ENCODE measurements at regions of chr16 and their contacts with region 1.

Region 1: DNA sequence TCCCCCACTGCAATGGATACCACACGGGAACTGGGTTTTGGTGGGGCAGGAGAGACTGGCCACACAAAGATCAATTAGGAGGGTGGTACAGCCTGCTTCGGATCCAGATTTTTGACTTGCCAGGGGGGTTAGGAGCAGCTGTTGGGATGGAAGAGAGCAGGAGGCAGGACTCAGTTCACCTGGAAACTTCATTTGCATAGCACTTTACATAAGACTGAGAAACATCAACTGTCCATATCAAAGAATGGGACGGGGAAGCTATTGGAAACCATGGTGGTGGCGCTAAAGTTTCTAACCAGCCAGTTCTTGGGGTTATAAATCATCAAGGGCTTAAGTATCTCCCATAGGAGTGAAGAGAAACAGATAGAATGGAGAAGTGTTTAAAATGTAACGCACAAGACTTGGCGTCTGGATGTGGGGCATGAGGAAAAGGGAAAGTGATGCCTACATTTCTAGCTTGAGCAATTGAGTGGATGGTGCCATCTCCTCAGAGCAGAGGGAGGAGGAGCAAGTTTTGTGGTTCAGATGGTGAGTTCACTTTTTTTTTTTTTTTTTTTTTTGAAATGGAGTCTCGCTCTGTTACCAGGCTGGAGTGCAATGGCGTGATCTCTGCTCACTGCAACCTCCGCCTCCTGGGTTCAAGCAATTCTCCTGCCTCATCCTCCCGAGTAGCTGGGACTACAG is 6.4 kb upstream of the SRCAP start:
- DNase-seq: no peak
- ATAC-seq: no peak
- H3K4me3 Mint-ChIP-seq: no peak overlapping the region
- H3K27ac Mint-ChIP-seq: peak overlapping the region; percentile 10
- H3K4me1 Mint-ChIP-seq: peaks cover 28% of the 10 kb centered on the region
- H3K27me3 Mint-ChIP-seq: no peaks in the 10 kb centered on the region

Region 2: DNA sequence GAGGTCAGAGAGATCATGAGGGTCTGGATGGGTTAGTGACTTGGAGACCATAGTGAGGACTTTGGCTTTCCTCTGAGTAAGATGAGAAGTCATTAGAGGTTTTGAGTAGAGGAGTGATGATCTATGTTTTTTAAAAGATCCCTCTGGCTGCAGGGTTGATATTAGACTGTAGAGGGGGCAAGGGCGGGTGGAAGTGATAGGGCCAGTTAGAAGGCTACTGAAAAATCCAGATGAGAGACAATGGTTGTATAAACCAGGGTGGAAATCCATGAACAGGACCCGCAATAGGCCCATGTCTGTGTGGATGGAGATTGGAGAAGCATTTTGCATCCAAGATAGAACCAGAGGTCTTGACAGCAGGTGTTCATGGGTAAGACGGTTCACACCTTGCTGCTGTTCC is 210.2 kb before region 1 on chr16:
- CTCF ChIA-PET with region 1: no interaction called
- POLR2A ChIA-PET with region 1: no interaction called
- DNase-seq: no peak
- ATAC-seq: no peak
- H3K4me3 Mint-ChIP-seq: no peak overlapping the region
- H3K27ac Mint-ChIP-seq: peak overlapping the region; percentile 40
- H3K4me1 Mint-ChIP-seq: peaks cover 63% of the 10 kb centered on the region
- H3K27me3 Mint-ChIP-seq: no peaks in the 10 kb centered on the region

Region 3: GRCh38 chr16:30628627-30629540 is 63.6 kb before region 1 on chr16:
- CTCF ChIA-PET with region 1: interaction called, 10 read pairs
- POLR2A ChIA-PET with region 1: no interaction called
- DNase-seq: peak; percentile 92
- ATAC-seq: peak; percentile 92
- H3K4me3 Mint-ChIP-seq: peak overlapping the region; percentile 45
- H3K27ac Mint-ChIP-seq: peak overlapping the region; percentile 67
- H3K4me1 Mint-ChIP-seq: peaks cover 10% of the 10 kb centered on the region
- H3K27me3 Mint-ChIP-seq: no peaks in the 10 kb centered on the region

Region 4: DNA sequence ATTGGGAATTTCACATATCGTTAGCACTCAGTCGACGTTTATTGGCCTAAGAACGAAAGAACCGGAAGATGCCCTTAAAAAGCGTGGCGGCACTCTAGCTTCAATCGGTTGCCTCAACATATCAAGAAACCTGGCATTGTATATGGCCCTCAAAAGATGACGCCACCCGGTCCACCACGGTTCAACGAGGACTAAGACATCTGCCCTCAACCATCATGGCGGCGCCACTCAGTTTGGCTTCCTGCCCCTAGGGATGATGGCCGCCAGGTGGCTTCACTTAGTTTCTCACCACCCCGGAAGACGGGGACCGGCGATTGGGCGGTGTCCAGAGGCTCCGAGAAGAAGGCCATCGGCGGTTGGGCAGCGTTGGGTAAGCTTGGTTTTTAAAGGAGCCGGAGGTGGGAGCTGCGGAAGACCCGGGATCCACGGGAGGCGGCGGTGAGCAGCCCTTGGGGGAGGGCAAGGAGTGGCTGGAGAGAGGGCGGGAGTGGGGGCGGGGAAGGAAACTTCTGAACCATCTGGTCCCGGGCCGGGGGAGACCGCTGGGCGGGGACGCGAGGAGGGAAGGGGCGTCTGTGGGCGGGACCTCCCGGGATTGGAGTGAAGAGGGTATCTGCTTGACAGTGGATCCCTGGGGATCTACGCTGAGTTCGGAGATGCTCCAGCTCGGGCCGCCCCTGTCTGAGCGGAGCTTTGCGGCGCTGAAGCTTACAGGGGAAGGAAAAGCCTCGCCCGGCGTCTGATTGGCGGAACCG is 42.0 kb before region 1 on chr16 and contains the start of gene PRR14:
- CTCF ChIA-PET with region 1: interaction called, 26 read pairs
- POLR2A ChIA-PET with region 1: interaction called, 5 read pairs
- DNase-seq: peak; percentile 100
- ATAC-seq: peak; percentile 86
- H3K4me3 Mint-ChIP-seq: peak within 1 kb of the TSS; percentile 91
- H3K27ac Mint-ChIP-seq: peak within 1 kb of the TSS; percentile 95
- H3K4me1 Mint-ChIP-seq: peaks cover 40% of the 10 kb centered on the region
- H3K27me3 Mint-ChIP-seq: peaks cover 1% of the 10 kb centered on the region
- total RNA-seq, gene PRR14: 87.6 to 91.4 TPM

Region 5: DNA sequence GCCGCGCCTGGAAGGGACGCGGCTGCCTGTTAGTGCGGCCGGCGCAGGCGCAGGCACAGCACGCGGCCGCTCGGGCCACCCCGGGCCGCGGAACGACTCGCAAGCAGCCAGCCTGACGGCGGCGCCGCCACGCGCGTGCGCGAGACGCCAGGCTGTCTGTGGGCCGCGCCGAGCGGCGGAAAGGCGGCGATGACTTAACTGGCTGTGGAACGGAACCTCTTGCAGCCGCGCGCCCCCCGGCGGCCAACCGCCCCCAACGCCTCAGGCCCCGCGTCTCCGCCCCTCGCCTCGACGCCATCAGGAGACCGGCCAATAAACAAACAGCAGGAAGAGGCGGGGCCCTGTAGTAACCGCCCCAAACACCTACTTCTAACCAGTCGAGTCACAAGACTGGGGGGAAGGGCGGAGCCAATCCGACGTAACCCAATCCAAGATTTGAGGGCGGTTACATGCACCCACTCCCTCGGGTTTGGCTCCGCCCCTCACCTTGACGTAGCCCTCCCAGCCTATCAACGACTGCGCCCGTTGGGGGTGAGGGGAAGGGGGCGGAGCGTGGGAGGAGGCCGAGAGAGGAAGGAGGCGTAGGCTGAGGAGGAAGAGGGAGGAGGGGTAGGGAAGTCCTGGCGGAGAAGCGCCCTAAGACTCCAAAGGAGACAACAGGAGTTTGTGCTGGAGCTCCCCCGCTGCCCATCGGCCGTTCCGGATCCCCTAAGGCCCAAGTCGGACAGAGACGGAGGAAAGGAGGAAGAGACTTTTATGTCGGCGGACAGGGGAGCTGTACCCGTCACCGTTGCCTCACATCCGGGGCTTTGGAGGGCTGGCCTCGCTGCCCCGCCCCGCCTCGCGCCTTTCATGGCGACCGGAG is 34.4 kb before region 1 on chr16 and contains the start of gene FBRS:
- CTCF ChIA-PET with region 1: interaction called, 129 read pairs
- POLR2A ChIA-PET with region 1: interaction called, 72 read pairs
- DNase-seq: peak; percentile 100
- ATAC-seq: peak; percentile 77
- H3K4me3 Mint-ChIP-seq: peak within 1 kb of the TSS; percentile 87
- H3K27ac Mint-ChIP-seq: peak within 1 kb of the TSS; percentile 100
- H3K4me1 Mint-ChIP-seq: peaks cover 49% of the 10 kb centered on the region
- H3K27me3 Mint-ChIP-seq: no peaks in the 10 kb centered on the region
- total RNA-seq, gene FBRS: 85.2 to 100 TPM

Region 6: GRCh38 chr16:30663820-30664396 is 28.6 kb before region 1 on chr16:
- CTCF ChIA-PET with region 1: interaction called, 129 read pairs
- POLR2A ChIA-PET with region 1: interaction called, 72 read pairs
- DNase-seq: no peak
- ATAC-seq: no peak
- H3K4me3 Mint-ChIP-seq: no peak overlapping the region
- H3K27ac Mint-ChIP-seq: peak overlapping the region; percentile 18
- H3K4me1 Mint-ChIP-seq: peaks cover 37% of the 10 kb centered on the region
- H3K27me3 Mint-ChIP-seq: no peaks in the 10 kb centered on the region

Region 7: GRCh38 chr16:30669896-30670797 is 22.4 kb before region 1 on chr16:
- CTCF ChIA-PET with region 1: interaction called, 20 read pairs
- POLR2A ChIA-PET with region 1: no interaction called
- DNase-seq: no peak
- ATAC-seq: no peak
- H3K4me3 Mint-ChIP-seq: no peak overlapping the region
- H3K27ac Mint-ChIP-seq: no peak overlapping the region
- H3K4me1 Mint-ChIP-seq: no peaks in the 10 kb centered on the region
- H3K27me3 Mint-ChIP-seq: no peaks in the 10 kb centered on the region

Region 8: DNA sequence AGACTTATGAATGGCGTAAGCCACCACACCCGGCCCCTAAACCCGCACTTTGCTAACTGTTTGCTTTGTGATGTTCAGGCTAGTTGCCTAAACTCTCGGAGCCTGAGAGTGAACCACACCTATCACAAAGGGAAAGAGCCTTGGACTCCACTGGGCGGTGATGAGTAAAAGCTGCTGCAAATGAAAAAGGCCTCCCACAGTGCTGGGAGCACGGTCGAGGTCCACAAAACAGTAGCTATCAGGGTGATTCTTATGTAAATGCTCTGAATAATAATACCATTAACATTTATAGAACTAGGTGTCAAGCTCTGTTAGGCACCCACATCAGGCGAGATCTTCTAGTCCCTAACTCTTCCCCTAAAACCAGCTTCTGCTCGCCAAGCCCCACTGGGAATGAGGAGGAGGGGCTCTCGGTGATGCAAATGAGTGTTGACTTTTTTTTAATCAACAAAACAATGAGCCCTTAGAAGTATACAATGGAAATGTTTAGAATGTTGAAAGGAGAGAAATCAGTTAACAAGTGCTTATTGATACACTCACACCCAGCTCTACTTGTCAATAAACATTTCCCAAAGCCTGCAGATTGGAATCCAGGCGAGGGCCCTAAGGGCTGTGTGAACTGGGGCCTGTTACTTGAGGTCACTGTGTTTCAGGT is 14.5 kb before region 1 on chr16:
- CTCF ChIA-PET with region 1: interaction called, 13 read pairs
- POLR2A ChIA-PET with region 1: no interaction called
- DNase-seq: no peak
- ATAC-seq: no peak
- H3K4me3 Mint-ChIP-seq: no peak overlapping the region
- H3K27ac Mint-ChIP-seq: no peak overlapping the region
- H3K4me1 Mint-ChIP-seq: no peaks in the 10 kb centered on the region
- H3K27me3 Mint-ChIP-seq: no peaks in the 10 kb centered on the region

Region 9: DNA sequence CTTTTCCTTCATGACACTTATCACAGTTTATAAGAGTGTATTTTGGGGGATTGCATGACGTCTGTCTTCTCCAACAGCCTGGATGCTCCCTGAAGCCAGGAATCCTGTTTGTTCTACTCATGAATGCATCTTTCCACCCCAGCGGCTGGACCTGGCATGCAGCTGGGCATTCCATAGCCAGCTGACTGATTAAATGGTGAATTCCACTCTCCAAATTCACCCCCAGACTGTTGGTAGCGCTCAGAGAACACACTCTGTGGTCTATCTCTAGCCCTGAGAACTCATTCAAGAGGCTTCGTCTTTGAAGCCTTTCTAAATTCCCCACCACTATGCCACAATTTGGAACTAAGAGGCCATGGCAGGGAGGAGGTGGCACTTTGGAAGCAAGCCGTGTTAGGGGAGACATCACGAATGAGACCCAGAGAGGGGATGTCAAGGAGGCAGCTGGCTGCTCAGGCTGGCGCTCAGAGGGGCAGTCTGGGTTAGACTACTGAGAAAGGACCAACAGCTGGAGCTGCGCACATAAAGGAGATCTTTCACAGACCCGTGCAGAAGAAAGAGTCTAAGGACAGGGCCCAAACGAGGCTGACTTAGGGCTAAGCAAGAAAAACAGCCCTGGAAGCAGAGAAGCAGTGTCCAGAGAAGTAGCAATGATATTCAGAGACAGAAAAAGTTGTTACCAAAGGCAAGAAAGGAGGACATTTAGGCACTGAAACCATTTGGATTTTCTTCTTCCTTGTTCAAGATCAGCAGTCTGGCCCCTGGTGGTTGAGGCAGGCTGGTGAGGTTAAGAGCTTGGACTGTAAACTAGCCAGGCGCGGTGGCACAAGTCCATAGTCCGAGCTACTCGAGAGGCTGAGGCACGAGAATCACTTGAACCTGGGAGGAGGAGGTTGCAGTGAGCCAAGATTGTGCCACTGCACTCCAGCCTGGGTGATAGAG is 136.9 kb after region 1 on chr16:
- CTCF ChIA-PET with region 1: no interaction called
- POLR2A ChIA-PET with region 1: no interaction called
- DNase-seq: no peak
- ATAC-seq: no peak
- H3K4me3 Mint-ChIP-seq: no peak overlapping the region
- H3K27ac Mint-ChIP-seq: no peak overlapping the region
- H3K4me1 Mint-ChIP-seq: no peaks in the 10 kb centered on the region
- H3K27me3 Mint-ChIP-seq: peaks cover 18% of the 10 kb centered on the region

Region 10: DNA sequence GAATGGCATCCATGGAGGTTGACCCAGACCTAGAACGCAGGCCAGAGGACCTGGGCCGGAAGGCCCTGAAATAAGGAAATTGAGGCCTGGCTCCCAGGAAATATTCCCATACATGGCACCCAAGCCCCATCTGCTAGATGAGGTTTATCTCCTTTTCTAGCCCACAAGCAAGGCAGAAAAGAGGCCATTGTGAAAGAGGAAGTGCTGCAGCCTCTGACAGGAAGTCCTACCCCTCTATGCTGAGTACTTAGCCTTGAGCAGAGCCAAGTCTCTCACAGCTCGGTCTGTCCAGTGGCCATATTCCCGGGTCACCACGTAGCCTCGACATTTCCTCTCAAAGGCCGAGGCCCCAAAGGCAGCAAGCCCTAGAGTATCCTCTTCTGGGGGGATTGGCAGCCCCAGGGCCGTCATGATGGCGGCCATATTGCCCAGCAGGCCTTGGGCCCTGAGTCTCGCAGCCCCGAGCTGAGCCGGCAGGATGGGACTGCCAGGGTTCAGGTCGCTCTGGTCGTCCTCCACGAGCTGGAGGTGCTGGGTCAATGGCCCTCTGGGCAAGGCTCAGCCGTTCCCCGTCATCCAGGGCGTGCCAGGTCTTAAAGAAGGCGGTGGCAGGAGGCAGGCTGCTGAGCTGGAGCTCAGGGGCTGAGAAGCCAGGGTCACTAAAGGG is 211.7 kb after region 1 on chr16:
- CTCF ChIA-PET with region 1: no interaction called
- POLR2A ChIA-PET with region 1: no interaction called
- DNase-seq: no peak
- ATAC-seq: no peak
- H3K4me3 Mint-ChIP-seq: peak overlapping the region; percentile 4
- H3K27ac Mint-ChIP-seq: peak overlapping the region; percentile 99
- H3K4me1 Mint-ChIP-seq: peaks cover 58% of the 10 kb centered on the region
- H3K27me3 Mint-ChIP-seq: no peaks in the 10 kb centered on the region